ENCODE measurements at regions of chr2 and their contacts with region 1.

Region 1: DNA sequence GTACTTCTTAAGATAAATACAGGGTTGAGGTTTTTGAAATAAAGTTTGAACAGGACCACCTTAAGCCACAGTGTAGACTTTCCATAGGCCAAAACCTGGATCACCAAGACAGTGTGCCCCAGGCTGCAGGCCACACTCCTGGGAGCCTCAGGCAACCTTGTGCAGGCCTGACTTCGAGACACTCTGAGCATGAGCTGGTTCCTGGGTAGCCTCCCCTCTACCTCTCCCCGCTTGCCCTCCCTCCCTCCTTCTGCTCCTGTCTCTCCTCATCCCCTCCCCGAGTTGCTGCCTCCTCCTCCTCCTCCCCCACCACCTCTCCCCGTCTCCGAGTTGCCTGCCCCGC is 10.6 kb upstream of the PROC start:
- DNase-seq: no peak
- H3K4me3 ChIP-seq: peak overlapping the region; percentile 60 to 64 (median 63)
- H3K27ac ChIP-seq: peak overlapping the region; percentile 80 to 94 (median 92)
- H3K4me1 ChIP-seq: peaks cover 35 to 47% (median 46%) of the 10 kb centered on the region in 4 donors
- H3K27me3 ChIP-seq: no peaks in the 10 kb centered on the region
- CTCF ChIP-seq: no peak
- EP300 ChIP-seq: no peak
- POLR2A ChIP-seq: no peak

Region 2: GRCh38 chr2:127387655-127388422 is 19.8 kb before region 1 on chr2 and contains the start of gene MAP3K2:
- intact Hi-C with region 1: loop called (anchors 2 kb)
- DNase-seq: peak; percentile 96
- H3K4me3 ChIP-seq: peak within 1 kb of the TSS; percentile 74 to 100 (median 97)
- H3K27ac ChIP-seq: peak within 1 kb of the TSS; percentile 97 to 100 (median 100)
- H3K4me1 ChIP-seq: peaks cover 19 to 50% (median 45%) of the 10 kb centered on the region in 4 donors
- H3K27me3 ChIP-seq: no peaks in the 10 kb centered on the region
- CTCF ChIP-seq: no peak
- EP300 ChIP-seq: no peak
- POLR2A ChIP-seq: peak; percentile 92
- total RNA-seq, gene MAP3K2: 51.4 to 68.6 (median 66.2) TPM

Measured in esophagus muscularis mucosa (tissue), 4 donors.